ENCODE measurements at regions of chr15 and their contacts with region 1.

Region 1: GRCh38 chr15:42704492-42704926 is 32.4 kb downstream of the CDAN1 start:
- DNase-seq: peak; percentile 58 to 80 (median 71)
- H3K4me3 ChIP-seq: no peak overlapping the region
- H3K27ac ChIP-seq: no peak overlapping the region
- H3K4me1 ChIP-seq: peaks cover 0 to 4% (median 1%) of the 10 kb centered on the region in 4 experiments
- H3K27me3 ChIP-seq: no peaks in the 10 kb centered on the region

Region 2: DNA sequence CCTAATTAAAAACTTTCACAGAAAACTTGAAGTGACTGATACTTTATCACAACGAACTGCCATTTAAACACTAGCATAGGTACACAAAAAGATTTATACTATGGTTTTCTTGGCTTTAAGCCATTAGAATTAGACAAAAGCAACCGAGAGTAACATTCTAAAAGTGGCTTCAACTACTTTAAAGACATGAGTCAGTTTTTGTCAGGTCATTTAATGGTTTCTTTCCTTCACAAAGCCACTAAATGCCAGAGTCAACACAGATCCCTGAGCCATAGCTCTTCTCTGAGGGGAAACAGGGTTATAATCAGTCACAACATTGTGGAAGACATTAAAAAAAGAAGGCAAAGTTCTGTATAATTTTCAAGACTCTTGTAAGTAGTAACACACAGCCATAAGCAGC is 290.6 kb before region 1 on chr15:
- CTCF ChIA-PET with region 1: no interaction called
- POLR2A ChIA-PET with region 1: no interaction called
- DNase-seq: no peak
- H3K4me3 ChIP-seq: no peak overlapping the region
- H3K27ac ChIP-seq: no peak overlapping the region
- H3K4me1 ChIP-seq: no peaks in the 10 kb centered on the region
- H3K27me3 ChIP-seq: no peaks in the 10 kb centered on the region

Region 3: DNA sequence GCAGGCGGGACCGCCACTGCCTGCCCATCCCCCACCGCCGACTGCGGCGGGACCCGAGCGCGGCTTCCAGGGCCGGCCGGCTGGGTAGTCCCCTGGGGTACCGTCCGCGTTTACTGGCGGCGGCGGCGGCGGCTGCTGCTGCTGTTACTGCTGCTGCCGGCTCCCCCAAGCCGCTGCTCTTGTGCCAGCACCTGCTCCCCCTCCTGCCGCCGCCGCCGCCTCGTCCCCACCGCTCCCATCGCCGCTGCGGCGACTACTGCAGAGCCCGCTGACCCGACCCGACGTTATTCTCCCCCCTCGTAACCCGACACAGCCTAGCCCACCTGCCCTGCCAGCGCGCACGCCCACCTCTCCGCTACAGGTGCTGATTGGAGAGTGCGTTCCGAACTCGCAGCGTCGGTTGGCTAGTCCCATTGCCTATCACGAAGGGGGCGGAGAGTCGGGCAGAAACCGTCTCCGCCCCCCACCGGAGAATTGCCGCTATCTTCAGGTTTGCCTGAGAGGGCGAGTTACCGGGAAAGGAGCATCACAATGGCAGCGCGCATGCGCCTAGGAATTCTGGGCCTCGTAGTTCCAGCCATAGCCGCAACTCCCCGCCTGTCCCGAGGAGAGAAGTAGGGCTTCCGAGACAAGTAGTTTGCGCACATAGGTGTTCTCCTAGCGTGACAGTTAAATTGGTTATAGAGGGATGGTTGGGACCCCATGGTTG is 216.2 kb after region 1 on chr15 and contains the start of gene TTBK2:
- CTCF ChIA-PET with region 1: interaction called, 13 read pairs
- POLR2A ChIA-PET with region 1: no interaction called
- DNase-seq: peak; percentile 99
- H3K4me3 ChIP-seq: peak within 1 kb of the TSS; percentile 64 to 97 (median 81)
- H3K27ac ChIP-seq: peak within 1 kb of the TSS; percentile 35 to 80
- H3K4me1 ChIP-seq: peaks cover 6 to 40% (median 26%) of the 10 kb centered on the region in 4 experiments
- H3K27me3 ChIP-seq: no peaks in the 10 kb centered on the region